CD14-positive monocyte (primary cell): ENCODE measurements at regions of chr20 and their contacts with region 1.

Region 1: DNA sequence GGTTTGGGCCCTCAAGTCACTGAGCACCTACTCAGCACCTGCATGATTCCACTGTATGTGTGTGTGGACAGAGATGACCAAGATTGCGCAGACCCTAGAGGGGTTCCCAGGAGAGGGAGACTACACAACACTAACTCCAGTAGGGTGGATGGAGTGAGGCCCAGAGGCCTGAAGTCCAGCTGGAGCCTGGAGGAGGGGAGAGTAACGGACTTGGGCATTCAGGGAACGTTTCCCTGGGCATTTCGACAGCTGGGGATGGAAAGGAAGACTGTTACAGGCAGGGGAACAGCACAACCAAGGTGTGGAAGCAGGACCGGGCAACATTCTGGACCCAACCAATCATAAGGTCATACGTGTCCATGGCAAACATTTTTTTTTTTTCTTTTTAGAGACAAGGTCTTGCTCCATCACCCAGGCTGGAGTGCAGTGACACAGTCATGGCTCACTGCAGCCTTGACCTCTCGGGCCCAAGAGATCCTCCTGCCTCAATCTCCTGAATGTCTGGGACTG is 11.1 kb upstream of the CEBPB start:
- DNase-seq: no peak
- H3K4me3 ChIP-seq: no peak overlapping the region
- H3K4me3 Mint-ChIP-seq: no peak overlapping the region
- H3K27ac ChIP-seq: no peak overlapping the region
- H3K27ac Mint-ChIP-seq: peak overlapping the region in 1 of 7 donors; percentile 89
- H3K4me1 ChIP-seq: peaks cover 7 to 8% of the 10 kb centered on the region in 2 donors
- H3K4me1 Mint-ChIP-seq: peaks cover 10% of the 10 kb centered on the region
- H3K27me3 ChIP-seq: no peaks in the 10 kb centered on the region
- H3K27me3 Mint-ChIP-seq: peaks cover 2 to 3% (median 2%) of the 10 kb centered on the region in 3 donors
- CTCF ChIP-seq: peak; percentile 69

Region 2: GRCh38 chr20:50120897-50121693 is 58.5 kb before region 1 on chr20:
- intact Hi-C with region 1: loop called in 1 of 2 experiments (anchors 2 kb)
- DNase-seq: peak; percentile 62 to 74 (median 67)
- H3K4me3 ChIP-seq: no peak overlapping the region
- H3K4me3 Mint-ChIP-seq: no peak overlapping the region
- H3K27ac ChIP-seq: no peak overlapping the region
- H3K27ac Mint-ChIP-seq: peak overlapping the region in 2 of 7 donors; percentile 13 to 66
- H3K4me1 ChIP-seq: peaks cover 5 to 6% of the 10 kb centered on the region in 2 donors
- H3K4me1 Mint-ChIP-seq: peaks cover 10% of the 10 kb centered on the region
- H3K27me3 ChIP-seq: no peaks in the 10 kb centered on the region
- H3K27me3 Mint-ChIP-seq: peaks cover 0 to 4% (median 2%) of the 10 kb centered on the region in 3 donors
- CTCF ChIP-seq: peak; percentile 85

Region 3: GRCh38 chr20:50292324-50293243 is 113.0 kb after region 1 on chr20:
- intact Hi-C with region 1: no loop called
- DNase-seq: peak; percentile 88 to 92 (median 88)
- H3K4me3 ChIP-seq: peak overlapping the region in 1 of 3 experiments; percentile 24
- H3K4me3 Mint-ChIP-seq: peak overlapping the region; percentile 39 to 67
- H3K27ac ChIP-seq: peak overlapping the region; percentile 53 to 66
- H3K27ac Mint-ChIP-seq: peak overlapping the region; percentile 79 to 93 (median 88)
- H3K4me1 ChIP-seq: peaks cover 35 to 39% of the 10 kb centered on the region in 2 donors
- H3K4me1 Mint-ChIP-seq: peaks cover 61% of the 10 kb centered on the region
- H3K27me3 ChIP-seq: no peaks in the 10 kb centered on the region
- H3K27me3 Mint-ChIP-seq: peaks cover 0 to 8% (median 6%) of the 10 kb centered on the region in 3 donors
- CTCF ChIP-seq: no peak